Posterior vena cava (tissue), 2 donors: ENCODE measurements at regions of chr12 and their contacts with region 1.

Region 1: GRCh38 chr12:132218915-132219314 is 74.7 kb downstream of the NOC4L start:
- DNase-seq: no peak

Region 2: DNA sequence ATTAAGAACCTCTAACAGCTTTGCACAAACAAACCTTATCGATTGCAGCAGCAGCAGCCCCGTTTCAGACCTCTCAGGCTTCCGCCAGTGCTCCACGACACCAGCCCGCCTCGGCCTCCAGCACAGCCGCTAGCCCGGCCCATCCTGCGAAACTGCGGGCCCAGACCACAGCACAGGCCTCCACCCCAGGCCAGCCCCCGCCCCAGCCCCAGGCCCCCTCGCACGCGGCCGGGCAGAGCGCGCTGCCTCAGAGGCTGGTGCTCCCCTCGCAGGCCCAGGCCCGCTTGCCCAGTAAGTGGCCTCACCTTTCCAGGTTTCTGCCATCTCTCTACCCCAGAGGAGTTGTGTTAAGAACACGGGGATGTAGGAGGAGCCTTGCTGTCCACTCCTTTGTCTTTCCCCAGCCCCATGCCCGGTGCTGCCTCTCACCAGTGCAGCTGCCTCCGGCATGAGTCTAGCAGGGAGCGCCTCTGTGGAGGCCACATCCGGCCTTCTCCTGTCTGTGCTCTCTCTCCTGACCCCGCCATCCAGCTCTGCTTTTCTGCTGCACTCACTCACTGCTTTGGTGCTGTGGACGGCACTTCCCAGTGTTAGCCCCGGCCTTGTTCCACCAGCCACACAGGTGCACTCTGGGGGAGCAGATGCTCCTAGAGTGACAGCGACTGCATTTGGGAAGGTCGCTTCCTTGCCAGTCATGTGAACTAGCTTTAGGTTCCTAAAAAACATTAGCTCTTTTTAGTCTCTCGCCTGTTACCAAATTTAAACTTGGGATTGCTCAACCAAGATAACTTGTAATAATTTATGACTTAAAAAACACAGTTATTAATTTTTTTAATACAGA is 197.7 kb before region 1 on chr12:
- intact Hi-C with region 1: no loop called
- DNase-seq: peak; percentile 77

Region 3: DNA sequence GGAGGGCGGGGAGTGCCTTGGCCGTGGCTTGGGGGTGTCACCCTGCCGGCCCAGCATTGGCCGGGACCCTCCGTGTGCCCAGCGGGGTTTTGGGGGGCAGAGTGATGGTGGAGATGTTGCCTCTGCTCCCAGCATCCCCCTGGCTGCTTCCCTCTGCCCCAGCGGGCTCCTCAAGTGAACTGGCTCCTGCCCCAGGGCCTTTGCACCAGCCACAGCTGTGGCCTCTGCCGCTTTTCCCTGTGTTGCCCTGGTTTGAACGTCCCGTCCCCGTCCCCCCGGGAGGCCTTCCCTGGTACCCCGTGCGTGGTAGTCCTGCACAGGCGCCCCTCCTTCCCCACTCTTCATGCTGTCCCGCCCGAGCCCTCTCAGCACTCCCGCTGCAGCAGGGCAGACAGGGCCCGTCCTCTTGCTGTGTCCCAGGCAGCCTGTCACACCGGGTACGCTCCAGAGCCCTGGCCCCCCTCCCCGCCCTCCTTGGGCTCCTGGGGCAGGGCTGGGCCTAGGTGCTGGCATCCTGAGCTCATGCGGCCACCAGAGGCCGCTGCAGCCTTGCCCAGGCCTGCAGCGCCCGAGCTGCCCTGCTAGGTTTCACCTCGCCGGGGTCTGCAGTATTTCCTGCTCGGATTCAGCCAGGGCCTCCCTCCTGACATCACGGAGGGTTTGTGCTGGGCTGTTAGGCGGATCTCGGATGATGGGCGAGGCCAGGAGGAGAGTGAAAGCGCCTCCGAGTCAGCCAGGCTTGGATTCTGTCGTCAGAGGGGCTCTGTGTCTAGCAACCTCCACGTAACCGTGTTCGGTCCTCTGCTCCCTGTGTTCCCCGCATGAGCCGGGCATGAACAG is 65.2 kb before region 1 on chr12:
- intact Hi-C with region 1: loop called in 1 of 2 experiments (anchors 2 kb)
- DNase-seq: peak; percentile 89

Region 4: DNA sequence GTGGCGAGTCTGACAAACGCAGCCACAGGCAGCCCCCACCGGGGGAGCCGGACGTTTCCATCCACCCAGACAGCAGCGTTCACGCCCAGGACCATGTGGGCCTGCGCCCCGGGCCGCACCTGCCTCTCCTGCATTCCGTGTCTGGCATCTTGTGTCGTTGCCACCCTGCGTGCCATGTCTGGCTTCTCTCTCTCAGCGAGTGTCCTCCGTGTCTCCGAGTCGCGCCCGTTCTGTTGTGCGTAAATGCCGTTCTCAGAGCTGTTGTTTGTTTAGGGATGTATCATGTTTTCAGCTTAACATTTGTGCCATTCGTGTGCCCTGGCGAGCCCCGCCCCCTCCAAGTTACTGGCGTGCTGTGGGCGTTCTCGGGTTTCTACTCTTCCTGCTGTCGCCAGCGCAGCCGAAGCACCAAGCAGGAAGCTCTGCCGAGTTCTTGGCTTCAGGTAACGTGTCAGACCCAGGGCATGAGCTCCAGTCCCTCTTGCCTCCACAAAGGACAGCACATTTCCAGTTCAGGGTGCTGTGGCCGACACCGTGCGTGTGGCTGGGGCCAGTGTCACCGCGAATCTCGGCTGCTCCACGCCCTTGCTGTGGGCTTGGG is 40.0 kb before region 1 on chr12:
- intact Hi-C with region 1: loop called in 1 of 2 experiments (anchors 1 kb)
- DNase-seq: peak; percentile 67

Region 5: GRCh38 chr12:132275110-132275531 is 56.2 kb after region 1 on chr12:
- intact Hi-C with region 1: no loop called
- DNase-seq: no peak

Region 6: GRCh38 chr12:133058203-133059125 is 839.5 kb after region 1 on chr12:
- intact Hi-C with region 1: no loop called
- DNase-seq: no peak